Right ventricle myocardium inferior (tissue), 1 donor: ENCODE measurements at regions of chr2 and their contacts with region 1.

Region 1: GRCh38 chr2:119407430-119408220 is 24.0 kb upstream of the TMEM37 start:
- DNase-seq: no peak
- ATAC-seq: peak; percentile 78

Region 2: GRCh38 chr2:119366649-119367471 is 40.8 kb before region 1 on chr2 and contains the starts of genes C2orf76 and DBI:
- intact Hi-C with region 1: loop called (anchors 2 kb)
- DNase-seq: peak; percentile 97
- ATAC-seq: peak; percentile 98
- total RNA-seq, gene C2orf76: 6.8 TPM
- total RNA-seq, gene DBI: 299 TPM

Region 3: DNA sequence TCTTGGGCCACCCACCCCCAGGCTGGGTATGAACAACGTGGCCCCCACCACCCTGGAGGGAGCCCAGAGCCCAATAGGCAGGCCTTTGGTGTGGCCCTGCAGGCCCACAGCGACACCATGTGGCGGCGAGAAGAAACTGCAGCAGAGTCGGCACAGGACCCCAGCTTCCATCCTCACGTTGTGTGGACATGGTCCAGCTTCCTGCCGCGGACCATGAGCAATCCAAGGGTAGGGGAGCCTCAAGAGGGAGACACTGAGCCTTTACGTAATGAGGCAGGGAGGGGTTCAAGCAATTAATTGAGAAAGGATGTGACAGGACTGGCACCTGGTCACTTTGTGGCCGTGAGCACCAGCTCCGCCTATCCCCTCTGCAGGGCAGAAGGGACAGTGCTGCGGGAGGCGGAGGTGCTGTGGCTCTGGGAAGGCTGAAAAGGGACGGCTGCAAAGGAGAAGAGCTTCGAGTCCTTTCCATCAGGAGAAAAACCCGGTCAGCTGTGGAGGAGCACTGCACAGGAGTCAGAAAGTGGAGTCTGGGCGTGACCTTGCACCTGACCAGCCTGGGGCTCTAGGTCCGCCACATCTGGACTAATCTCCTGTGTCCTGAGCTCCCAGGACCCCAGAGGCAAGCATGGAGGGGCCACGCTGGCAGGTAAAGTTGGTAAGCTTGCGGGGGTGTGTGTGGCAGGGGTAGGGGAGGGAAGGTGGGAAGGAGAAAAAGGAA is 68.8 kb after region 1 on chr2:
- intact Hi-C with region 1: loop called (anchors 1 kb)
- DNase-seq: no peak
- ATAC-seq: peak; percentile 53

Region 4: DNA sequence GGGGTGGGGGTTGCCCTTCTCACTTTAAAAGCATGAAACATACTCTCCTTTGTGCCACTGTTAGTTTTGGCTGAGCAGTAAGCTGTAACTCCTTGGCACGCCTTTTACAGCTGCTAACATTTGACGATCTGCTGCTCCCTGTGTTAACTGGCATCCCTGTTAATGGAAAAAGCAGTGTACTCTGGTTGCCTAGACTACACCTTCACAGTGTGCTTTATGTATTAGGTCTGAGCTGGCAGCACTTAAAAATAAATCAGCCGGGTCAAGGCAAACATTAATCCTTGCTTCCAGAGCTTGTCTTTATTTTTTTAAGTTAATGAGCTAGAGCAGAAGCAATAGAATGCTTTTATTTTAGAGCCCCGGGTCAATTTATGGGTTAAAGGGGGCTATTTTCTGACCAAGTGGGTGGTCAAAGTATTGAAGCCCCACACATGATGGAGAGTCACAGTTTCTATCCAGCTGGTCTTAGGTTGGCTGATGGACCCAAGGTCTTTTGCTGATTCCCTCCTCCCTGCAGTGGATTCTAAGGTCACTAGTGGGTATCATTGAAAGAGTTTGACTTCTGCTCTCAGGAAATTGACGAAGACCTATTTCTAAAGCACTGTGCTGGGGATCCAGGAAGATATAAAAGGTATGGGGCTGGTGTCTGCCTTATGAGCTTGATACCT is 191.1 kb after region 1 on chr2:
- intact Hi-C with region 1: loop called (anchors 10 kb)
- DNase-seq: no peak
- ATAC-seq: peak; percentile 75

Region 5: GRCh38 chr2:119659601-119660342 is 252.1 kb after region 1 on chr2:
- intact Hi-C with region 1: loop called (anchors 5 kb)
- DNase-seq: no peak
- ATAC-seq: peak; percentile 37